ENCODE measurements at regions of chr2 and their contacts with region 1.

Region 1: GRCh38 chr2:217695033-217695520 is 307.7 kb downstream of the TNS1 start:
- DNase-seq: no peak

Region 2: GRCh38 chr2:216890138-216890537 is 804.9 kb before region 1 on chr2:
- intact Hi-C with region 1: loop called in 1 of 2 experiments (anchors 5 kb)
- DNase-seq: no peak